Heart right ventricle (tissue), 16 donors: ENCODE measurements at regions of chr14 and their contacts with region 1.

Region 1: DNA sequence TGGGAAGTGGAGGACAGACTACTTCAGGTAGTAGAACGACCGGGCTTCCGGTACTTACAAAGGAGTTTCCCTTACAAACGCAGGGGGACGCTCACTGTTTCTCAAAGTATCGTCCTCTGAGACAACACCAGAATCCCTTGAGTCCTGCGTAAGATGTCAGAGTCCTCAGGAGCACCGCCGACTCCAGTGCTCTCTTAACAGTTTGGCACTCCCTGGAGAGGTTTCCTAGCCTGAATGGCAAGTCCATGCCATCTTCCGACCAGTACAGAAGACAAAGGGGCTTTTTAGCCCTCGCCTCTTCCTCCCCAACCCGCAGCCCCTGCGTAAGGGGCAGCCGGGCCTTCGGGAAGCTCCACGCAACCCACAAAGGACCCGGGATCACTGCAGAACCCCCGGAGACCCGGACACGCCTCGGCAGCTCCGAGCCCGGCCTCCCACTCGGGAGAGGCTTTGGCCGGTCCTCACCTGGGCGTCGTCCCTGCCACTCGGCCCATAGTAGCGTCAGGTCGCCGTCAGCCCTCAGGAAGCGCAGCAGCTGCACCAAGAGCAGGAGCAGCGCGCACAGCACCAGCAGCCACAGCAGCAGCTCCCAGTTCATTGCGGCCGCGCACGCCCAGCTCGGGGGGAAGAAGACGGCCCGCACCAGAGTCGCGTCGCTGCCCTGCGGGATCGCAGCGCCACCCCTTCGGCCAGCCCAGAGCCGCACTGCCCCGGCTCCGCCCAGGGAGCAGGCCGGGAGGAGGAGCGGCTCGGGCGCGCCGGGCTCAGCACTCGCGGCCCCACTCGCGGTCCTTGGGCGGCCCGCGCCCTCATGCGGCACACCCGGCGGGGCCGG is at the start of gene DHRS7:
- DNase-seq: peak; percentile 82 to 90
- ATAC-seq: peak; percentile 98 to 100 (median 99)
- H3K4me3 ChIP-seq: peak within 1 kb of the TSS; percentile 72 to 96 (median 82)
- H3K27ac ChIP-seq: peak within 1 kb of the TSS; percentile 79 to 96 (median 90)
- H3K4me1 ChIP-seq: peaks cover 0 to 52% (median 17%) of the 10 kb centered on the region in 9 donors
- H3K27me3 ChIP-seq: no peaks in the 10 kb centered on the region
- CTCF ChIP-seq: peak in 6 of 9 donors; percentile 45 to 83 (median 60)
- total RNA-seq, gene DHRS7: 24.5 to 55.5 (median 32.1) TPM

Region 2: DNA sequence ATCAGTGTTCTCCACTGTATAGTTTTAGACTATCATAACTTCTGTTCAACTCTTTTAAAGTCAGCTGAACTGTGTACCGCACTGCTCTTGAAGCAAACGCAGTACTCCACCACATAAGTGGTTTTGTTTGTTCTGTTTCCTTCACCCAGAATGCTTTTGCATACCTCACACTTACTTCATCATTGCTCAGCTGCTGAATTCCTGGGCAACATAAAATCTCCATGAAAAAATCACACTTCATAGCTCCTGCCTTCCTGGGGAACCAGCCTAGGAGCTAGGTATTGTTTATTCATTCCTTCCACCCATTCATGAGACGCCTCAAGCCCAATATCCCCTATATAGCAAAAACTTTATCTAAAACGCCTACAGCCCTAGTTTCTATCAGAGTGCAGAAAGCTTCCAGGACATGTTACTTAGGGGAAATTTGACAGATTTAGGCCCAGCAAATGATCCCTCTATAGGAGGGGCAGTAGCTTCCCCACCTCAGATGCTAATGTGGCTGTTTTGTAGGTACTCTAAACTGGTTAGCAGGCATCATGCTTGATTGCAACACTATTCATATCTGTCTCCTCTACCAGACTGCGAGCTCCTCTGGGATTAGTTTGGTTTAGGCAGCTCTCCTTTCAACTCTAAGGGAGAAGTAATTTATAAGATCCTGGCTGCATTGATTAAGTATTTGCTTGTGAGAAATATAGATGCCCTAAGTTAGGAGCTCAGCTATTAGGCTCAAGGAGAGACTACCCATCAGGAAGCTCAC is 200.5 kb before region 1 on chr14:
- intact Hi-C with region 1: loop called in 2 of 10 experiments (anchors 5 kb)
- DNase-seq: no peak
- ATAC-seq: peak in 6 of 8 donors; percentile 12 to 35 (median 26)
- H3K4me3 ChIP-seq: no peak overlapping the region
- H3K27ac ChIP-seq: no peak overlapping the region
- H3K4me1 ChIP-seq: peaks cover 0 to 11% (median 0%) of the 10 kb centered on the region in 9 donors
- H3K27me3 ChIP-seq: no peaks in the 10 kb centered on the region
- CTCF ChIP-seq: no peak

Region 3: DNA sequence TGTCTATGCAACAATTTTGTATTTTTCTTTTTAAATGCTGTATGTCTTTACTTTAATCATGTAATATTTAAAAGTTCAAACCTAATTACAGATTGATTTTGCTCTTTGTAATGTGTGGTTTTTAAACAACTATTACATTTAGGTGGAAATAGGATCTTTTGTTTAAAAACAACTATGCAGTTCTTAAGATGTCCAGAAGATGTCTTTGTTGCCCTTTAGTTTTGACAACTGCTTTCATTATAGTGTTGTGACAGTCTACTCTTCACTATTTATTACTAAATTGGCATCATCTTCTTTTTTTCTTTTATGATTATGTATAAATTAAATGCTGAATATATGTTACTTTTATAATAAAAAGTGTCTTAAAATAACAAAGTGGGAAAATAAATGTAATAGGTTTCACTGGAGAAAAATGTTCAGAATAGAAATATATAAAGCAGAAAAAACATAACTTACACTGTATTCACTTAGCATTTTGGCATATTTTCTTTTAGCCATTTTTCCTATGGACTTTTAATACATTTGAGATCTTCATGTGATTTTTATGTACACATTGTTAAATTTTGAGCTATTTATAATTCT is 100.3 kb before region 1 on chr14:
- intact Hi-C with region 1: loop called in 4 of 10 experiments (anchors 5 kb)
- DNase-seq: no peak
- ATAC-seq: no peak
- H3K4me3 ChIP-seq: no peak overlapping the region
- H3K27ac ChIP-seq: no peak overlapping the region
- H3K4me1 ChIP-seq: no peaks in the 10 kb centered on the region
- H3K27me3 ChIP-seq: no peaks in the 10 kb centered on the region
- CTCF ChIP-seq: peak; percentile 37 to 78 (median 63)

Region 4: GRCh38 chr14:60091550-60092530 is 73.1 kb before region 1 on chr14 and contains the start of gene PCNX4:
- intact Hi-C with region 1: loop called in 7 of 10 experiments (anchors 1 to 10 kb)
- DNase-seq: peak; percentile 96 to 98
- ATAC-seq: peak; percentile 96 to 100 (median 98)
- H3K4me3 ChIP-seq: peak within 1 kb of the TSS; percentile 66 to 90 (median 74)
- H3K27ac ChIP-seq: peak within 1 kb of the TSS; percentile 96 to 99 (median 98)
- H3K4me1 ChIP-seq: peaks cover 0 to 46% (median 38%) of the 10 kb centered on the region in 9 donors
- H3K27me3 ChIP-seq: no peaks in the 10 kb centered on the region
- CTCF ChIP-seq: peak in 1 of 9 donors; percentile 4
- total RNA-seq, gene PCNX4: 24.7 to 56.7 (median 35.2) TPM

Region 5: GRCh38 chr14:60125918-60126317 is 39.0 kb before region 1 on chr14:
- intact Hi-C with region 1: loop called in 1 of 10 experiments (anchors 2 kb)
- DNase-seq: no peak
- ATAC-seq: no peak
- H3K4me3 ChIP-seq: no peak overlapping the region
- H3K27ac ChIP-seq: no peak overlapping the region
- H3K4me1 ChIP-seq: no peaks in the 10 kb centered on the region
- H3K27me3 ChIP-seq: no peaks in the 10 kb centered on the region
- CTCF ChIP-seq: no peak

Region 6: DNA sequence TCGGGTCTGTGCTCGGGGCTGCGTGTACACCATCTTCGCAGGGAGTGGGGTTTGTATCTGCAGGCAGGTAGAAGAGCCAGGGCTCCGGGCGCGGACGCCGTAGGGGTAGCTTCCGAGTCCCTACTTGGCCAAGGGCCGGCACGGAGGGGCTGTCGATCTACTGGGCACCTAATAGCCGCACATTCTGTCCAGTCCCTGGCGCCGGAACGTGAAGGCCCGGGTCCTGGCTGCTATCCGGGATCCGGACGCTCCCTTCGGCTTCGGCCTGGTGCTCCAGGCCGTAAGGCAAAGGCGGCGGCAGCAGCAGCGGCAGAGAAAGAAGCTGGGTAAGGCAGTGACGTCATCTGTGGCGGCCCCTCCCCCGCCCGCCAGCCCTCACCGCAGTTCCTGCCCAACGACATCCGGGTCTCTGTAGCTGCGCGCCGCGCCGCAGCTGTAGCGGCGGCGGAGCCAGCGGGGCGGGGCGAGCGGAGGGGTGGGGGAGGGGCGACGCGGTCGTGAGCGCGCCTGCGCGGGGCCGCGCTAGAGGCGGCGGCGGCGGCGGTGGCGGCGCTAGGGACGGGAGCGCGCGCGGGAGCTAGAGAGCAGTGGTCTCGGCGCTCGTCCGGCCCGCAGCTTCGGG is 83.9 kb after region 1 on chr14 and contains the start of gene PPM1A:
- intact Hi-C with region 1: loop called in 2 of 10 experiments (anchors 2 to 10 kb)
- DNase-seq: peak; percentile 95 to 97
- ATAC-seq: peak; percentile 93 to 98 (median 96)
- H3K4me3 ChIP-seq: peak within 1 kb of the TSS; percentile 71 to 96 (median 82)
- H3K27ac ChIP-seq: peak within 1 kb of the TSS; percentile 97 to 100 (median 99)
- H3K4me1 ChIP-seq: peaks cover 0 to 54% (median 34%) of the 10 kb centered on the region in 9 donors
- H3K27me3 ChIP-seq: no peaks in the 10 kb centered on the region
- CTCF ChIP-seq: no peak
- total RNA-seq, gene PPM1A: 79.9 to 122 (median 101) TPM